Activated naive CD4-positive, alpha-beta T cell treated with anti-CD3 and anti-CD28 coated beads for 36 hours (primary cell): ENCODE measurements at regions of chr12 and their contacts with region 1.

Region 1: DNA sequence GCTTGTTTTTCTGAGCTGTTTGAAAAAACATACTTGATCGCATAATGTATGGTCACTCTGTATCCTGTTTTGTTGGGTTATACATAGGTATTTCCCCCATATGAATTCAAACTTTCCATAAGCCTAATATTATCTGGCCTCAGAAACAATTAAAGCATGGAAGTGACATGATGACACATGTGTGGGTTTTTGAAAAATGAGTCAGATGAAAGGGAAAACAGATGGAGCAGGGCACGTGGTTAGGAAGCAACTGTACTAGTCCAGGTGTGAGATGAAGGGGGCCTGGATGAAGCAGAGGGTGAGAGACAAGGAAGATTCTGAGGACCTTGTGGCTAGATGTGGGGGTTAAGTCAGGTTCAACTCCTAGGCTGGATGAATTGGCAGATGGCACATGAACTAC is 92.7 kb upstream of the DNM1L start:
- DNase-seq: no peak
- H3K4me3 Mint-ChIP-seq: no peak overlapping the region
- H3K27ac Mint-ChIP-seq: no peak overlapping the region
- H3K4me1 Mint-ChIP-seq: peaks cover 48% of the 10 kb centered on the region
- H3K27me3 Mint-ChIP-seq: no peaks in the 10 kb centered on the region

Region 2: DNA sequence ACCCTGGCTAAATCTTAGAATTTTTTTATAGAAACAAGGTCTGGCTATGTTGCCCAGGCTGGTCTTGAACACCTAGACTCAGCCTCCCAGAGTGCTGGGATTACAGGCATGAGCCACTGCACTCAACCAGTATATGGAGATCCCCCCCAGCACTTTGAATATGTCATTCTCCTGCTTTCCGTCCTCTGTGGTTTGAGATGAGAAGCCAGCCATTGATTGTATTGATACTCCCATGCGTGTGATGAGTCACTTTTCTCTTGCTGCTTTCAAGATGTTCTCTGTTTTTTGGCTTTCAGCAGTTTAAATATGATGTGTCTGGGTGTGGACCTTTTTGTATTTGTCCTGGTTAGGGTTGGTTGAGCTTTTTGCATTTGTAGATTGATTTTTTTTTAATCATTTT is 17.5 kb after region 1 on chr12:
- CTCF ChIA-PET with region 1: interaction called, 3 read pairs
- intact Hi-C with region 1: loop called (anchors 1 kb)
- DNase-seq: peak; percentile 73
- H3K4me3 Mint-ChIP-seq: no peak overlapping the region
- H3K27ac Mint-ChIP-seq: peak overlapping the region; percentile 57
- H3K4me1 Mint-ChIP-seq: peaks cover 8% of the 10 kb centered on the region
- H3K27me3 Mint-ChIP-seq: no peaks in the 10 kb centered on the region

Region 3: DNA sequence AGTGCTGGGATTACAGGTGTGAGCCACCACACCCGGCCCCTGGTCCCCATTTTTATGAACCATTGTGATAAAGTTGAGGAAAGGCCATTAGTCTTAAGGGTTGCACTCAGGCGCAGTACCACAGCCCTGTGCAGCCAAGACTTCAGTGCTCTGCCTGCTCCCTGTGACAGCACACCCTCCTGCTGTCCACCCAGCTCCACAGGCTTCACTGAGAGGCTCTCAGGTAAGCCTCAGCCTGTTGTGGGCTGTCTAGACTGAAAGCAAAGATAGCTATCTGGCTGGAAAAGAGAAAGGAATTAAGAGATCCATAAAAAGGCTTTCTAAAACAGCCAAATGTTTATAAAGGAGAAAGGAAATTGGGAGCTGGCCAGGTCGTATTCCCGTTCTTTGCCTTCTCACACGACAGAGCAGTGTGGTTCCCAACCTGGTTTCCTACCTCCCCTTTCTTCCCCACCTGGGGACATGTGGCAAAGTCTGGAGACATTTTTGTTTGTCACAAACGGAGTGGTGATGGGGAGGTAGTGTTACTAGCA is 73.6 kb after region 1 on chr12:
- CTCF ChIA-PET with region 1: interaction called, 3 read pairs
- intact Hi-C with region 1: loop called (anchors 5 kb)
- DNase-seq: no peak
- H3K4me3 Mint-ChIP-seq: no peak overlapping the region
- H3K27ac Mint-ChIP-seq: no peak overlapping the region
- H3K4me1 Mint-ChIP-seq: peaks cover 3% of the 10 kb centered on the region
- H3K27me3 Mint-ChIP-seq: no peaks in the 10 kb centered on the region